ENCODE measurements at regions of chr4 and their contacts with region 1.

Region 1: GRCh38 chr4:64617800-64618199 is 208.6 kb upstream of the TECRL start:
- DNase-seq: no peak
- ATAC-seq: peak; percentile 38; the same call in 1 of the 2 replicates
- H3K4me3 Mint-ChIP-seq: no peak overlapping the region
- H3K27ac Mint-ChIP-seq: peak overlapping the region; percentile 46
- H3K4me1 Mint-ChIP-seq: peaks cover 9% of the 10 kb centered on the region
- H3K27me3 Mint-ChIP-seq: no peaks in the 10 kb centered on the region
- CTCF ChIP-seq: no peak

Region 2: GRCh38 chr4:64911846-64912245 is 294.0 kb after region 1 on chr4:
- CTCF ChIA-PET with region 1: interaction called, 11 read pairs
- POLR2A ChIA-PET with region 1: no interaction called
- DNase-seq: peak; percentile 37
- ATAC-seq: peak; percentile 99
- H3K4me3 Mint-ChIP-seq: no peak overlapping the region
- H3K27ac Mint-ChIP-seq: no peak overlapping the region
- H3K4me1 Mint-ChIP-seq: peaks cover 10% of the 10 kb centered on the region
- H3K27me3 Mint-ChIP-seq: no peaks in the 10 kb centered on the region
- CTCF ChIP-seq: no peak; the same call in 1 of the 2 replicates